ENCODE measurements at regions of chr14 and their contacts with region 1.

Region 1: DNA sequence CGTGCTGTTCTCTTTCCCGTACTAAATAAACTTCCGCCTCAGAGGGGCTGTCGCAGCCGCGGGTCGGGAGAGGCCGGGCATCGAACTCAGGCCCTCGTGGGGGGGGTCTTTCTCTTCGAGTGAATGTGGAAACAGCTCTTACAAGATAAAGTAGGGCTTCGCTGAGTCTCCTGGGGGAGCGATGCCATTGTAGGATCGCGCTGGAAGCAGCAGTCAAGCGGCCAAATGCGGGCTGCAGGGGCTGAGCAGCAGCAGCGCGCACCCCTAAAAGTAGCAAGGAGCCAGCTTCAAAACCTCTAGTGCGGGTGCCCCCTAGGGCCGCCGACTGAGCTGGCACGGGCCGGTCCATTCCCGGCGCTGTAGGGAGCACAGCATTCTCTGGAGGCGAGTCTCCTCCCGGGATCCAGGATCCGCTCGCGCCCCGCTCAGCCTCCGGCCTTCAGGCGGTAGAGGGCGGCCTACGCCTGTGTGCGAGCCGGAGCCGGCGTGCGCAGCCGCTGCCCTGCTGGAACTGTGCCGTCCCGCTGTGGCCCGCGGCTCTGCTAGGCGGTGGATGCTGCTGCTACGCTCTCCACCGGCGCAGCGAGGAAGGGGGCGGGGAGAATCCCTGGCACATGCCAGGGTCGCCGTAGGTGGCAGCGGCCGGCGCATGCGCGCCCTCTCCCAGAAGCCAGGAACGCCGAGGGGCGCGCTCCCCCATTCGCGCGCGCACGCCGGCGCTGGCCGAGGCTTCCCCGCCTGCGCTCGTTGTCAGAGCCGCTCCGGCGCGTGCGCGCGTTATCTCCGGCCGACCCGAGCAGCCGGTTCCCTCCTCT is at the start of gene FUT8:
- DNase-seq: peak; percentile 78
- H3K4me3 ChIP-seq: peak within 1 kb of the TSS; percentile 90
- H3K27me3 ChIP-seq: no peaks in the 10 kb centered on the region
- CTCF ChIP-seq: peak; percentile 77
- polyA plus RNA-seq, gene FUT8: 14.7 and 23.0 TPM in 2 replicates

Region 2: GRCh38 chr14:65164068-65164824 is 248.0 kb before region 1 on chr14:
- CTCF ChIA-PET with region 1: interaction called, 103 read pairs
- POLR2A ChIA-PET with region 1: interaction called, 4 read pairs
- DNase-seq: no peak
- H3K4me3 ChIP-seq: no peak overlapping the region
- H3K27me3 ChIP-seq: no peaks in the 10 kb centered on the region
- CTCF ChIP-seq: peak; percentile 57

Region 3: GRCh38 chr14:65222440-65222858 is 189.8 kb before region 1 on chr14:
- CTCF ChIA-PET with region 1: interaction called, 21 read pairs
- POLR2A ChIA-PET with region 1: interaction called, 3 read pairs
- DNase-seq: no peak
- H3K4me3 ChIP-seq: no peak overlapping the region
- H3K27me3 ChIP-seq: no peaks in the 10 kb centered on the region
- CTCF ChIP-seq: peak; percentile 87

Region 4: GRCh38 chr14:65333943-65334687 is 78.1 kb before region 1 on chr14:
- CTCF ChIA-PET with region 1: interaction called, 10 read pairs
- POLR2A ChIA-PET with region 1: no interaction called
- DNase-seq: peak; percentile 82
- H3K4me3 ChIP-seq: no peak overlapping the region
- H3K27me3 ChIP-seq: no peaks in the 10 kb centered on the region
- CTCF ChIP-seq: no peak

Region 5: DNA sequence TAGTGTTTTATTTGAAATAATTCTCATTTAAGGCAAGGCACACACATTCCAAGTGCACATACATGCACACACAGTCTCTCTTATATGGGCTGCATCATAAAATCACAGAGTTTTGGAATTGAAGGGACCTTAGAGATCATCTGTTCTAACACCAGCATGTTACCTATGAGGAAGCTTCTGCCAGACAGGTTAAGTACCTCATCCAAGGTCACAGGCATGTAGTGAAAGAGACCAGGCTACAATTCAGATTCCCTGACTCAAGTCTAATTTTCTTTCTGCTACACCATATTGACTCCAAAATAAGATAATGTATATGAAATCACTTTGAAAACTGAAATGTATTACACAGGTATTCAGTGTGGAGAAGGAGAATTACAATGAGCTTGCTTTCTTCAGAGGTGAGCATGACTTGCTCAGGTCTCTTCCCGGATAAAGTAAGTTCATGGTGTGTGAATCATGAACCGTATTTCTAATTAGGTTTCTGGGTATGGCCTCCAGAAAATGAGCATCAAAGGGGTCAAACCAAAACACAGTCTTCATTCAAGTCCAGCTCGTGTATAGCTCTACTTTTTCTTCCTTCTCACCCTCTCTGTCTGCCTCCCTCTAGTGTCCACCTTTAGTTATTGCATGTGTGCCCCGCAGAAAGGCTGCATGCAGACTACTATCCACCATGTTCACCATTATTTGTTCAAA is 412.2 kb after region 1 on chr14:
- CTCF ChIA-PET with region 1: interaction called, 91 read pairs
- POLR2A ChIA-PET with region 1: interaction called, 5 read pairs
- DNase-seq: peak; percentile 7
- H3K4me3 ChIP-seq: no peak overlapping the region
- H3K27me3 ChIP-seq: peaks cover 12% of the 10 kb centered on the region; the same call in 1 of the 2 replicates
- CTCF ChIP-seq: peak; percentile 92

Region 6: DNA sequence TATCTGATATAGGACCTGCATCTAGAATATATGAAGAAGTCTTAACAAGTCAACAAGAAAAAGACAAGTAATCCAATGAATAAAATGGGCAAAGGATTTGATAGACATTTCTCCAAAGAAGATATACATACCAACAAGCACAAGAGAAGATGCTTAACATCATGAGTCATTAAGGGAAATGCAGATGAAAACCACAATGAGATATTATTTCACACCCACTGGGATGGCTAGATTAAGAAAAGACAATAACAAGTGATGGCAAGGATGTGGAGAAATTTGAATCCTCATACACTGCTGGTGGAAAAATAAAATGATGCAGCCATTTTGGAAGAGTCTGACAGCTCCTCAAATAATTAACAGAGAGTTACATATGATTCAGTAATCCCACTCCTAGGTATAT is 502.9 kb after region 1 on chr14:
- CTCF ChIA-PET with region 1: no interaction called
- POLR2A ChIA-PET with region 1: interaction called, 16 read pairs
- DNase-seq: no peak
- H3K4me3 ChIP-seq: no peak overlapping the region
- H3K27me3 ChIP-seq: no peaks in the 10 kb centered on the region; the same call in 1 of the 2 replicates
- CTCF ChIP-seq: no peak

Region 7: GRCh38 chr14:65958664-65959562 is 546.7 kb after region 1 on chr14:
- CTCF ChIA-PET with region 1: interaction called, 65 read pairs
- POLR2A ChIA-PET with region 1: no interaction called
- DNase-seq: no peak
- H3K4me3 ChIP-seq: no peak overlapping the region
- H3K27me3 ChIP-seq: no peaks in the 10 kb centered on the region
- CTCF ChIP-seq: peak; percentile 36

Measured in BJ (cell line).